Heart right ventricle (tissue), 16 donors: ENCODE measurements at regions of chr11 and their contacts with region 1.

Region 1: DNA sequence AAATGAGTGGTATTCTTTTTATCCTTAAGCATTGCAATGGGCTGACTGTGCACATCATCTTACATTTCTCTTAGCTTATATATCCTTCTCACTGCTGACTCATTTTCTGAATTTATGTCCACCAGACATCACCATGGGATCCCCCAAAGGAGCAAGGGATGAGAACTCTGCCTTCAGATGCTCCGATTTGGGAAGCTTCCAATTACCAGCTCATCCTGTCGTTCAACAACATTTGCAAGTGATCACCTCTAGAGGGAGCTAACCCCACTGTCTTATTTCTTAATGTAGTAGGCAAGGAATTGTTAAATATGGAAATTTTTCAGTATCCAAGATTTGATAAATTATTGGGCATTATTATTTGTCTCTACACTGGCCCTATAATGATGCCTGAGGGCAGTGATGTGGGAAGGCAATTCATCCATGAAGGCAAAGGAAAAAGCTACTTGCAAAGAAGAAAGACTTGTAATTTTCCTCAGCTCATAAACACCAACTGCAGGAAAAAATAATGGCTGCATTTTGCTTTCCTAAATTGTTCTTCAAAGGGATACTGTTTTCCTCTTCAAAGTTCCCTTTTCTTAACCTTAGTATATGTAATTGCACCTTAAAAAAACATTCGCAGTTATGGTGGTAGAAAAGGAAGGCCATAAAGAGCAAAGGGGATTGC is 102.4 kb upstream of the FSHB start:
- DNase-seq: peak in 1 of 2 donors; percentile 5
- ATAC-seq: no peak
- H3K4me3 ChIP-seq: no peak overlapping the region
- H3K27ac ChIP-seq: no peak overlapping the region
- H3K4me1 ChIP-seq: no peaks in the 10 kb centered on the region
- H3K27me3 ChIP-seq: no peaks in the 10 kb centered on the region
- CTCF ChIP-seq: peak; percentile 40 to 72 (median 65)

Region 2: GRCh38 chr11:29432719-29433325 is 695.6 kb before region 1 on chr11:
- intact Hi-C with region 1: loop called in 1 of 10 experiments (anchors 10 kb)
- DNase-seq: no peak
- ATAC-seq: no peak
- H3K4me3 ChIP-seq: no peak overlapping the region
- H3K27ac ChIP-seq: no peak overlapping the region
- H3K4me1 ChIP-seq: no peaks in the 10 kb centered on the region
- H3K27me3 ChIP-seq: no peaks in the 10 kb centered on the region
- CTCF ChIP-seq: peak in 8 of 9 donors; percentile 14 to 63 (median 52)

Region 3: GRCh38 chr11:29448246-29448877 is 680.0 kb before region 1 on chr11:
- intact Hi-C with region 1: loop called in 1 of 10 experiments (anchors 10 kb)
- DNase-seq: no peak
- ATAC-seq: peak in 1 of 8 donors; percentile 58
- H3K4me3 ChIP-seq: no peak overlapping the region
- H3K27ac ChIP-seq: no peak overlapping the region
- H3K4me1 ChIP-seq: peaks cover 0 to 4% (median 0%) of the 10 kb centered on the region in 9 donors
- H3K27me3 ChIP-seq: no peaks in the 10 kb centered on the region
- CTCF ChIP-seq: peak in 8 of 9 donors; percentile 17 to 64 (median 54)

Region 4: GRCh38 chr11:29978549-29978948 is 149.9 kb before region 1 on chr11:
- intact Hi-C with region 1: no loop called
- DNase-seq: no peak
- ATAC-seq: peak; percentile 47 to 98 (median 82)
- H3K4me3 ChIP-seq: no peak overlapping the region
- H3K27ac ChIP-seq: peak overlapping the region in 9 of 10 donors; percentile 17 to 76 (median 64)
- H3K4me1 ChIP-seq: peaks cover 0 to 44% (median 5%) of the 10 kb centered on the region in 9 donors
- H3K27me3 ChIP-seq: no peaks in the 10 kb centered on the region
- CTCF ChIP-seq: no peak

Region 5: GRCh38 chr11:30196400-30197206 is 68.2 kb after region 1 on chr11:
- intact Hi-C with region 1: loop called in 1 of 10 experiments (anchors 10 kb)
- DNase-seq: peak; percentile 48 to 62
- ATAC-seq: peak in 6 of 8 donors; percentile 61 to 90 (median 80)
- H3K4me3 ChIP-seq: no peak overlapping the region
- H3K27ac ChIP-seq: no peak overlapping the region
- H3K4me1 ChIP-seq: no peaks in the 10 kb centered on the region
- H3K27me3 ChIP-seq: no peaks in the 10 kb centered on the region
- CTCF ChIP-seq: peak; percentile 52 to 81 (median 74)

Region 6: DNA sequence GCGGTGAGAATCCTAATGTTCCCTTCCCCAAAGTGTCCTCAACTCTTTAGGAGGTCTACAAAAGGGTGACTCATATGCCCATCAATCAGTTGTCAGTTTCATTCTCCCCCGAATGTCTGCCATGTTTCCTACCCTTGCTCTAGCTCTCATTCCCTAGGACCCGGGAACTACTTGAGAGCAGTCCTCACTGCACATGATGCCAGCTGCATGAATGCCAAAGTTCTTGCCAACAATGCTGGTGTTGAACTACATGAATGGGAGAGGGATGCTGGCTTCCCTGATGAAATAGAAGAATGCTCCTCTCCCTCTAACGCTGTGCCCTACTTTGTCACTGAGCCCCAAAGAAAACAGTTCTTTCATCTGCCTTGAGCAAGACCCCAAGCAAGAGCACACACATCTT is 89.9 kb after region 1 on chr11:
- intact Hi-C with region 1: no loop called
- DNase-seq: peak in 1 of 2 donors; percentile 13
- ATAC-seq: peak in 3 of 8 donors; percentile 59 to 65 (median 61)
- H3K4me3 ChIP-seq: no peak overlapping the region
- H3K27ac ChIP-seq: no peak overlapping the region
- H3K4me1 ChIP-seq: peaks cover 0 to 9% (median 0%) of the 10 kb centered on the region in 9 donors
- H3K27me3 ChIP-seq: no peaks in the 10 kb centered on the region
- CTCF ChIP-seq: no peak

Region 7: DNA sequence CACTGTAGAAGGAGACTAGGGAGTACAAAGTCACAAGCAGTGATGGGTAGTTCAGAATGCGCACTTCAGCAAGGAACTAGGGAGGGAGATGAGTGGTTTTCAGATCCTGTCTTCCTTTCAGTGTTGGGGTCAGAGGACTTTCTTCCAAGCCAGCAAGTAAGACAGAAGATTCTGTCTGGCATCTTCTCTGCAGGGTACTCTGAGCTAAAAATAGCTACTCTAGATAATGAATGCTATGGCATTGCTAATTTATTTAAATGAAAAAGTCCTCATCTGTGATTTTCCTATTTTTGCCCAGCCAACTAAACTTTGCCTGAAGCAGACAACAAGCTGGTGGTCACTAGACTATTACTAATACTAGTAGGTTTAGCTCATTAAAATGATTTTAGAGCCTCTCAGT is 176.2 kb after region 1 on chr11:
- intact Hi-C with region 1: loop called in 1 of 10 experiments (anchors 10 kb)
- DNase-seq: no peak
- ATAC-seq: no peak
- H3K4me3 ChIP-seq: no peak overlapping the region
- H3K27ac ChIP-seq: no peak overlapping the region
- H3K4me1 ChIP-seq: no peaks in the 10 kb centered on the region
- H3K27me3 ChIP-seq: peaks cover 0 to 10% (median 0%) of the 10 kb centered on the region in 7 donors
- CTCF ChIP-seq: no peak

Region 8: DNA sequence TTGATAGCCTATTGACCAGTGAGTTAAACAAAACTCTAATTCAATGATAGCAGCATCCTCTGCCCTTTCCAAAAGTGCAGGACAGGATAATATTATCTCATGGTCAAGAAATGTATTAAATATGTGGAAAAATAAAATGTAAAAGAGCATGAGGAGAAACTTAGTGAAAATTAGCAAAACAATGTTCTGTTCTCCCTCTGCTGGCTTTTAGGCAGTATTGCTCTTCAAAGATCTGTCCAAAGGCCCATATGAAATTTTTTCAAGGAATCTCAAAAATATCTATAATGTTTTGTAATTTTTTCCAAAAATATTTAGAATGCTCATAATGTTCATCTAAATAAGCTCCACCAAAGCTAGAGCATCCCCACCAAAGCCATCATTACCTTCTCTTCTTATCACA is 186.2 kb after region 1 on chr11:
- intact Hi-C with region 1: loop called in 3 of 10 experiments (anchors 5 to 10 kb)
- DNase-seq: no peak
- ATAC-seq: no peak
- H3K4me3 ChIP-seq: no peak overlapping the region
- H3K27ac ChIP-seq: no peak overlapping the region
- H3K4me1 ChIP-seq: no peaks in the 10 kb centered on the region
- H3K27me3 ChIP-seq: peaks cover 0 to 11% (median 0%) of the 10 kb centered on the region in 7 donors
- CTCF ChIP-seq: peak in 8 of 9 donors; percentile 14 to 56 (median 41)

Region 9: DNA sequence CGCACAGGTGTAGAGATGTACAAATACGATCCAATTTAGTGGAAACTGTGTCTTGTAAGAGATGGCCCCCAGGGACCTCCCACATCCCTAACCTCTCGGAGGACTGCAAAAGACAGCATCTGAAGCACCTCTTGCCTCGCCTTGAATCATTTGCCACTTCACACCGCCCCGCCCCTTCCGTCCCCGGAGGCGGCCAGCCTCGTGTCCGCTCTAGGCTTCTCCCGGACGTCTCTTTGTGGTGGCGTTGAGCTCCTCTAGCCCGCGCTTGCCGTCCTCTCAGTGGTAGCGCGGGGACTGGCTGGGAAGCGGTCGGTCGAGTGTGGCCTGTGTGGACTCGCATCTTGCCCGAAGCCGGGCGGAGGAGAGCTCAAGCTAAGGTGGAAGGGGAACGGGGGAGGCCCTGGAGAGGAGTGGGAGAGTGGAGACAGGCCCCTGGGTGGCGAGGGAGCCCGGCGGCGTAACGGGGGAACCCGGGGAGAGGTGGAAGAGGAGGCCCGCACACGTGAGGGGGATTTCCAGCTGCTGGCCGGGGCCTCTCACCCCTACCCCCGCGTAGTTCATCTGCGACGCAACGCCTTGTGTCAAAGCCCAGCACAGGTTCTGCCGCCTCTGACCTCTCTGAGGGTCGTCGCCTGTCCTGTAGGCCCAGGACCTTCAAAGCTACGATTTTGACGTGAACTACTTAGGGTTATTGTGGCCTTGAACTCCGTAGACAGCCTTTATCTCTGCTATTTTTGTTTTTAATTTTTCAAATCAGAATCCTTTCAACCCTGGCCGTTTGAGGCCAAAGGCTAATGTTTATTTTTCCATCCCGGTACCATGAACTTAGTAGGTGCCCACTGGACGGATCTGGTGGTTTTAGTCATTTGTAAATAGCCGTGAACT is 194.7 kb after region 1 on chr11 and contains the start of gene ARL14EP:
- intact Hi-C with region 1: loop called in 3 of 10 experiments (anchors 5 to 10 kb)
- DNase-seq: peak; percentile 91 to 92
- ATAC-seq: peak; percentile 99 to 100 (median 100)
- H3K4me3 ChIP-seq: peak within 1 kb of the TSS; percentile 56 to 85 (median 72)
- H3K27ac ChIP-seq: peak within 1 kb of the TSS in 9 of 10 donors; percentile 78 to 96 (median 89)
- H3K4me1 ChIP-seq: peaks cover 3 to 45% (median 37%) of the 10 kb centered on the region in 9 donors
- H3K27me3 ChIP-seq: peaks cover 0 to 15% (median 0%) of the 10 kb centered on the region in 7 donors
- CTCF ChIP-seq: peak in 1 of 9 donors; percentile 15
- total RNA-seq, gene ARL14EP: 28.2 to 43.5 (median 32.3) TPM